GM12878 (cell line): ENCODE measurements at regions of chr16 and their contacts with region 1.

Region 1: DNA sequence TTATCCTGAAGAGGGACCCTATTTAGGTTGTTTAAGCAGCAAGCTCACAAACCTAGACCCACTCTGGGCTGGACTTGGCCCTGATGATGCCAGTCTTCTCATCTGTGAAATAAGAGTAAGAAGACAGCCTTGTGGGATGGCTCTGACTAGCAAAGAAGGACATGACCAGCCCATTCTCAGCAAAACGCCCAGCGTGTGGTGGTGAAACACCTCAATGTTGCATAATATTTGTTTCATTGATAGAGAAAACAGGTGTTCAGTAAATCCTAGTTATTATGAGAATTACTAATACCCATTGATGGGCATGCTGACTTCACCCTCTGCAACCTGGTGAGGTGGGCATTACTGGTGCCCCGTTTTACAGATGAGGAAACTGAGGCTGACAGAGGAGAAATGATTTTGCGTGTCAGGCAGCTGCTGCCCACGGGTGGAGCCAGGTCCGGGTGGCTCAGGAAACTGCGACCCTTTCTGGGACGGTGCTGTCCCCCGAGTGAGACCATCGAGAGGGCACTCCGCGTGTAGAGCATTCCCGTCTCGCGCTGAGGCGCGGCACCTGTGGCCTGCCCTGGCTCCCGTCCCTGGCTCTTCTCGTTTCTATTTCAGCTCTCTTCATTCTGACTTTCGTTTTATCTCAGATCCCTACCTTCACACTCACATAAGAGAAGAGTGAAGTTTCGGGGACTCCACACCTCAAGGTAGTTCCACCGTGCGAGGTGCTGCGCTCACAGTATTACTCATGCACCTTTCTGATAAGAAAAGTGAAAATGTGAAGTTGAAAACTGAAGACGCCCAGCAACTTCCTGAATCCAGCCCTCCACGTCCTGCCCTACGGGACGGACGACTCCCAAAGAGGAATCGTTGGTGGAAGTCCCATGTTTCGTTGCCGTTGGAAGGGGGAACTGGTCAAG is 48.5 kb downstream of the IRF8 start:
- DNase-seq: peak; percentile 90
- ATAC-seq: peak; percentile 89
- H3K4me3 ChIP-seq: peak overlapping the region; percentile 69
- H3K27ac ChIP-seq: peak overlapping the region; percentile 95
- H3K4me1 ChIP-seq: peaks cover 64% of the 10 kb centered on the region
- H3K27me3 ChIP-seq: no peaks in the 10 kb centered on the region
- CTCF ChIP-seq: no peak
- EP300 ChIP-seq: peak; percentile 60 to 68; a peak in 3 of 4 replicates
- POLR2A ChIP-seq: peak; percentile 64; the same call in 1 of the 2 replicates
- RAD21 ChIP-seq: peak; percentile 28; the same call in 1 of the 2 replicates

Region 2: DNA sequence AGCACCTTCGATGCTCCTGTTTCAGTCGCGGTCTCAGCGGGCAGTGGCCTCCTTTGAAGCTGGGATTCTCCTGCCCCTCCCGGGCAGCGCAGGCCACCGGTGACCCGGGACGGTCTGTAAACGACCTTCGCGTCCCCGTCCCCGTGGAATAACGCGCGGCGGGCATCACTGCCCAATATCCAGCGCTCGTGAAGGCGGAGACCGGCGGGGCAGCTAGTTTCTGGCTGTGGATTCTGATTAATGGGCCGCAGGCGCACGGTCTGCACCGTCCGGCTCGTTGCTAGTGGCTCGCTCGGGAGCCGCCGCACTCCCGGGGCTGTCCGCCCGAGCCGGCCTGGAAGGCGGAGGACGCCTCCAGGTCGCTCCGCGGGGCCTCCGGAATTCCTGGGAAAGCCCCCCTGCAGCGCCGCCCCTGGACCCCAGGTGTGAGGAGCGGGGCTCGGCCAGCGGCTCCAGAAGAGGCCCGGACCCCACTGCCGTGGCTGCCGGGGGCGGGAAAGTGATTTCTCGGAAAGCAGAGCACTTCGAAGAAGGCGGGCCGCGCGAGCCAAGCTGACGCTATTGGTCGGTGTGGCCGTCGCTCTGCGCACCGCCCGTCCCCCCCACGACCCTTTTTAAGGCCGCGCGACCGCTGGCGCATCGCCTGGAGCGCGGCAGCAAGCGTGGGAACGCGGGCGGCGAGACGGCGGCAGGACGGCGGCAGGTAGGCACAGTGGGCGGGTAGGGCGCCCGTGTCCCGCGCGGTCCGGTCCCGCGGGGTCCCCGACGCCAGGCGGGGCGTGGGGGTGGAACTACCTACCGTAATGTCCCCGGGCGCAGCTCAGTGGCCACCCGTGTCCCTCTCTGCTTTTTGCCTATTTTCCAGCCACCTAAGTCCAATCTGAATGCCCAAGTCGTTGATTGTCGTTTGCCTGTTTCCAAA is 48.7 kb before region 1 on chr16 and contains the start of gene IRF8:
- CTCF ChIA-PET with region 1: interaction called, 6 read pairs
- POLR2A ChIA-PET with region 1: interaction called, 5 read pairs
- RAD21 ChIA-PET with region 1: interaction called, 9 read pairs
- SMC1A ChIA-PET with region 1: interaction called, 17 read pairs
- in situ Hi-C with region 1: no loop called
- intact Hi-C with region 1: no loop called
- DNase-seq: peak; percentile 59
- ATAC-seq: peak; percentile 77
- H3K4me3 ChIP-seq: peak within 1 kb of the TSS; percentile 99
- H3K27ac ChIP-seq: peak within 1 kb of the TSS; percentile 89
- H3K4me1 ChIP-seq: peaks cover 7% of the 10 kb centered on the region
- H3K27me3 ChIP-seq: no peaks in the 10 kb centered on the region
- CTCF ChIP-seq: no peak
- EP300 ChIP-seq: no peak
- POLR2A ChIP-seq: peak; percentile 100
- RAD21 ChIP-seq: no peak
- polyA plus RNA-seq, gene IRF8: 17.1 to 34.5 TPM

Region 3: DNA sequence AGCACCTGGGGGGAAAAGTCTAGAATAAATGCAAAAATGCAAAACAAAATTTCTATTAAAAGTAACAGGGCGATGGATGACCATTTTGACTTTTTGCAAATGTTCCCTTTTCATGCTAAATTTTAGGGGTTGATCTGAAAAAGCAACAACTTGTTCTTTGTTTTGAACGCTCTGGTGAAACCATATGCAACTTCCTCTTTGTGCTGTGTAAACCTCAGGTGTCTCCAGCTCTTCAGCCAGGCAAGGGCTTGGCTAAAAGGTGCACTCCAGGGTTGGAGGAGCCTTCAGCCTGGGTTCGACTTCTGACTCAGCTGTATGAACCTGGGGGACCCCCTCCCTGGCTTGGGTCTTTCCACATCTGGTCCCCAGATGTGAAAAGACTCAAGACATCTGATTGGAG is 39.0 kb before region 1 on chr16:
- CTCF ChIA-PET with region 1: interaction called, 11 read pairs
- POLR2A ChIA-PET with region 1: interaction called, 7 read pairs
- RAD21 ChIA-PET with region 1: interaction called, 7 read pairs
- SMC1A ChIA-PET with region 1: interaction called, 17 read pairs
- in situ Hi-C with region 1: no loop called
- intact Hi-C with region 1: no loop called
- DNase-seq: peak; percentile 59
- ATAC-seq: peak; percentile 61
- H3K4me3 ChIP-seq: peak overlapping the region; percentile 41
- H3K27ac ChIP-seq: peak overlapping the region; percentile 45
- H3K4me1 ChIP-seq: peaks cover 83% of the 10 kb centered on the region
- H3K27me3 ChIP-seq: no peaks in the 10 kb centered on the region
- CTCF ChIP-seq: no peak
- EP300 ChIP-seq: 0 out of 4 replicates have a peak, but pooled peaks of 1 of the 2 experiments have one; percentile 1
- POLR2A ChIP-seq: peak; percentile 48
- RAD21 ChIP-seq: no peak

Region 4: GRCh38 chr16:85935974-85936760 is 11.3 kb before region 1 on chr16:
- CTCF ChIA-PET with region 1: interaction called, 4 read pairs
- POLR2A ChIA-PET with region 1: interaction called, 15 read pairs
- RAD21 ChIA-PET with region 1: interaction called, 36 read pairs
- SMC1A ChIA-PET with region 1: interaction called, 45 read pairs
- in situ Hi-C with region 1: no loop called
- intact Hi-C with region 1: loop called (anchors 1 kb)
- DNase-seq: peak; percentile 89
- ATAC-seq: peak; percentile 93
- H3K4me3 ChIP-seq: peak overlapping the region; percentile 36; the same call in 1 of the 2 replicates
- H3K27ac ChIP-seq: peak overlapping the region; percentile 97
- H3K4me1 ChIP-seq: peaks cover 54% of the 10 kb centered on the region
- H3K27me3 ChIP-seq: no peaks in the 10 kb centered on the region
- CTCF ChIP-seq: peak in 2 of 3 experiments; percentile 5 to 6; a peak in 2 of 6 replicates
- EP300 ChIP-seq: peak; percentile 74 to 82; a peak in 2 of 4 replicates
- POLR2A ChIP-seq: 0 out of 2 replicates have a peak, but pooled peaks have one; percentile 19
- RAD21 ChIP-seq: peak; percentile 26; the same call in 1 of the 2 replicates

Region 5: GRCh38 chr16:85961988-85962911 is 14.8 kb after region 1 on chr16:
- CTCF ChIA-PET with region 1: interaction called, 10 read pairs
- POLR2A ChIA-PET with region 1: interaction called, 8 read pairs
- RAD21 ChIA-PET with region 1: interaction called, 3 read pairs
- SMC1A ChIA-PET with region 1: interaction called, 4 read pairs
- in situ Hi-C with region 1: no loop called
- intact Hi-C with region 1: no loop called
- DNase-seq: no peak
- ATAC-seq: no peak
- H3K4me3 ChIP-seq: no peak overlapping the region
- H3K27ac ChIP-seq: no peak overlapping the region
- H3K4me1 ChIP-seq: peaks cover 18% of the 10 kb centered on the region
- H3K27me3 ChIP-seq: no peaks in the 10 kb centered on the region
- CTCF ChIP-seq: 0 out of 6 replicates have a peak, but pooled peaks of 1 of the 3 experiments have one; percentile 15
- EP300 ChIP-seq: no peak
- POLR2A ChIP-seq: no peak
- RAD21 ChIP-seq: 0 out of 2 replicates have a peak, but pooled peaks have one; percentile 17

Region 6: DNA sequence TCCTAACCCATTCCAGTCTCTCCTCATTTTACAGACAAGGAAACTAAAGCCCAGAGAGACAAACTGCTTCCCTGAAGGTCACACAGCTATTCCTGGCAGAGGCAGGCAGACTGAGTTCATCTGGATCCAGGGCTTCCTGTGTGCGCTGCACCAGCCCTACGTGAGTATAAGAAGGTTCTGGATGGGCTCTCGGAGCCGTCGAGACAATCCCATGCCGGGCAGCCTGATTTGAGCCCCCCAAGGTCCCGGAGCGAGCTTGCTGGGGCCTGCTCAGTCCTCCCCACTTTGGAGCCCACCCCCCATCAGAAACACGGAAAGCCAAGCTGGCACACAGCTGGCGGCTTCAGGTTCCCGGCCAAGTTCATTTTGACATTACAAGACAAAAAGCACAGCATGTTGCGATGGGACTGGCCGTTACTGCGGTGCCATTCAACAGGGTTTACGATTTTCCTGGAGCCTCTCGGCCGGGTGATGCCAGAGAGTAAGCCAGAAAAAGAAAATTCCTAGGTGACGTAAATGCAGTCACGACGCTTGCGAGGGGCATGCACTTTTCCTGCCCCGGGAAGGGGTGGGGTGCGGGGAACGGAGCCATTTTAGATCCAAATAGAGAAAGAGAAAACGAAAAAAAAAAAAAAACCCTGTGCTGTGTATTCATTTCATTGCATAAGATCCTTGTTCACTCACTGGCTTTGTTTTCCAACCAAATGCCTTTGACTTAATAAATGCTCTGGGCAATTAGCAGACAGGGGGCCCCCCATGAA is 395.7 kb after region 1 on chr16:
- CTCF ChIA-PET with region 1: no interaction called
- POLR2A ChIA-PET with region 1: no interaction called
- RAD21 ChIA-PET with region 1: no interaction called
- SMC1A ChIA-PET with region 1: no interaction called
- in situ Hi-C with region 1: no loop called
- intact Hi-C with region 1: no loop called
- DNase-seq: no peak
- ATAC-seq: no peak
- H3K4me3 ChIP-seq: no peak overlapping the region
- H3K27ac ChIP-seq: no peak overlapping the region
- H3K4me1 ChIP-seq: no peaks in the 10 kb centered on the region
- H3K27me3 ChIP-seq: peaks cover 2 to 5% of the 10 kb centered on the region in 2 experiments; a peak in 3 of 4 replicates
- CTCF ChIP-seq: no peak
- EP300 ChIP-seq: no peak
- POLR2A ChIP-seq: no peak
- RAD21 ChIP-seq: no peak